Heart left ventricle (tissue), 16 donors: ENCODE measurements at regions of chr1 and their contacts with region 1.

Region 1: GRCh38 chr1:154404984-154405761 is at the start of gene IL6R:
- DNase-seq: peak; percentile 90 to 97 (median 95)
- ATAC-seq: peak; percentile 70 to 91 (median 88)
- H3K4me3 ChIP-seq: peak within 1 kb of the TSS; percentile 56 to 81 (median 72)
- H3K27ac ChIP-seq: peak within 1 kb of the TSS; percentile 76 to 99 (median 94)
- H3K4me1 ChIP-seq: peaks cover 0 to 94% (median 37%) of the 10 kb centered on the region in 12 donors
- H3K27me3 ChIP-seq: no peaks in the 10 kb centered on the region
- CTCF ChIP-seq: peak; percentile 23 to 75 (median 56)
- POLR2A ChIP-seq: peak in 1 of 2 donors; percentile 79
- total RNA-seq, gene IL6R: 5.7 to 26.6 (median 13.1) TPM

Region 2: DNA sequence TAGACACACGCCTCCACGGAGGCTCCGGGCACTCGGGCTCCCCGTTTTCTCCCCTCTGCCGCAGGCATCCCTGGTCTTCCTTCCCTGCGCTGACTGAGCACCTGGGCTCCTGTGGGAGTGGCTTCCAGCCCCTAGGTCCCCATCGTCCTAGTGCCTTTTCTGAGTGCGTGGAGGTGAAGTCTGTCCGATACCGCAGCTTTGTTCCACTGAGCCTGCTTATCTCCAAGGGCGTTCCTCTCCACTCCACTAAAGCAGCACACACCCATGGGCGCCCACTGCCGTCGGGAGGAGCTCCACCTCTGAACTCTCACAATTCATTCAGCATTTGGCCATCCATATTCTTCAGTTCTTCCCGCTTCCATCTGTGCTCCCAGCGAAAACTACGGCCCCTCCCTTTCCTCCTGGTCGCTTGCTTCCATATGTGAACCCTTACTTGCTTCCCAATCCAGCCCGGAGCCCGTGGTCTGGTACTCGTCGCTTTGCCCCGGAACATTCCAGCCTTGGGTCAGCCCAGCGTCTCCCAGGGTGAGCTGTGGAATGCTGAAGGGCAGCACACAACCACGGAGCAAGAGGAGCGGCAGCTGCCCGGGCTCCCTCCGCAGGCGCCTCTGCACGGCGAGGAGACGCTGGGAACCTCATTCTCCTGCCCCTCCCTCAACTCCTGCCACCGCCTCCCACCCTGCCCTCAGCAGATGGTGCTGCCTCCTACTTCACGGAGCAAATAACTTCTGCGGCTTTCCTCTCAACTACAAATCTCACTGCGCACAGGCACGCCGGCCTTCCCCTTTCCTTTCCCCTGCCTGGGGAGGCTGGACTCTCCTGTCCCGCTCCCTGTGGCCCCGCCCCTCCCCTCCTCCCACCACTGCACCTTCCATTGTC is 52.4 kb before region 1 on chr1:
- intact Hi-C with region 1: loop called in 2 of 10 experiments (anchors 5 kb)
- DNase-seq: peak; percentile 34 to 70 (median 44)
- ATAC-seq: peak; percentile 44 to 65 (median 58)
- H3K4me3 ChIP-seq: peak overlapping the region; percentile 29 to 57 (median 48)
- H3K27ac ChIP-seq: peak overlapping the region in 9 of 12 donors; percentile 15 to 72 (median 47)
- H3K4me1 ChIP-seq: peaks cover 0 to 29% (median 13%) of the 10 kb centered on the region in 12 donors
- H3K27me3 ChIP-seq: no peaks in the 10 kb centered on the region
- CTCF ChIP-seq: no peak
- POLR2A ChIP-seq: no peak

Region 3: GRCh38 chr1:154434346-154435085 is 29.3 kb after region 1 on chr1:
- intact Hi-C with region 1: loop called in 2 of 10 experiments (anchors 1 to 2 kb)
- DNase-seq: peak; percentile 81 to 89 (median 83)
- ATAC-seq: peak; percentile 86 to 89 (median 86)
- H3K4me3 ChIP-seq: peak overlapping the region in 8 of 12 donors; percentile 12 to 39 (median 29)
- H3K27ac ChIP-seq: peak overlapping the region; percentile 43 to 96 (median 79)
- H3K4me1 ChIP-seq: peaks cover 0 to 74% (median 37%) of the 10 kb centered on the region in 12 donors
- H3K27me3 ChIP-seq: no peaks in the 10 kb centered on the region
- CTCF ChIP-seq: peak in 1 of 12 donors; percentile 5
- POLR2A ChIP-seq: peak in 1 of 2 donors; percentile 7

Region 4: GRCh38 chr1:154442006-154442740 is 37.0 kb after region 1 on chr1:
- intact Hi-C with region 1: loop called in 2 of 10 experiments (anchors 5 kb)
- DNase-seq: peak in 1 of 5 donors; percentile 21
- ATAC-seq: peak; percentile 35 to 57 (median 50)
- H3K4me3 ChIP-seq: no peak overlapping the region
- H3K27ac ChIP-seq: peak overlapping the region in 1 of 12 donors; percentile 31
- H3K4me1 ChIP-seq: peaks cover 0 to 43% (median 0%) of the 10 kb centered on the region in 12 donors
- H3K27me3 ChIP-seq: no peaks in the 10 kb centered on the region
- CTCF ChIP-seq: peak; percentile 26 to 52 (median 34)
- POLR2A ChIP-seq: no peak

Region 5: GRCh38 chr1:154453574-154454352 is 48.6 kb after region 1 on chr1:
- intact Hi-C with region 1: loop called in 1 of 10 experiments (anchors 5 kb)
- DNase-seq: no peak
- ATAC-seq: peak; percentile 45 to 82 (median 76)
- H3K4me3 ChIP-seq: no peak overlapping the region
- H3K27ac ChIP-seq: peak overlapping the region in 2 of 12 donors; percentile 15 to 71
- H3K4me1 ChIP-seq: peaks cover 0 to 44% (median 8%) of the 10 kb centered on the region in 12 donors
- H3K27me3 ChIP-seq: no peaks in the 10 kb centered on the region
- CTCF ChIP-seq: no peak
- POLR2A ChIP-seq: no peak

Region 6: DNA sequence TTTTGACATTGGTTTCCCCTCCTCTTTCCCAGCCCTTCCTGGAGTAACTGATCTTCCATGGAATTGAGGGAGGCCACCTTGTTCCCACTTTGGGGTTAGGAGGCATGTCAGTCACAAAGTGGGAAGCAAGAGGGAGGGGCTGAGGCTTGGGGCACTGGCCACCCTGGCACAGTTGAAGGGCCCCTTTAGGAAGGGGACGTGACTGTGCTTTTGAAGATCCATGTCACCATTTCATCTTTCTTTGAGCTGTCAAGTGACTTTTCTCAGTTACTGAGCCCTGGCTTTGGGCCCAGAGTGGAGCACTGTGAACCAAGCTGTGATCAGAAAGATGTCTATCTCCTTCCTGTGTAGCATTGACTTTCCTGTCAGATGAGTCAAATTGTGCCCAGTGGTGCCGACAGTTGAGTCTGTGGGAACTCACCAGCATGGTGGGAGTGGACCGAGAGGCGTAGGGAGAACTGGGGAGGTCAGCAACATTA is 58.4 kb after region 1 on chr1:
- intact Hi-C with region 1: loop called in 1 of 10 experiments (anchors 10 kb)
- DNase-seq: peak in 2 of 5 donors; percentile 33 to 39
- ATAC-seq: peak in 3 of 4 donors; percentile 36 to 55 (median 38)
- H3K4me3 ChIP-seq: no peak overlapping the region
- H3K27ac ChIP-seq: peak overlapping the region in 3 of 12 donors; percentile 43 to 91 (median 64)
- H3K4me1 ChIP-seq: peaks cover 0 to 60% (median 7%) of the 10 kb centered on the region in 12 donors
- H3K27me3 ChIP-seq: no peaks in the 10 kb centered on the region
- CTCF ChIP-seq: no peak
- POLR2A ChIP-seq: no peak